Transverse colon (tissue), 4 donors: ENCODE measurements at regions of chr17 and their contacts with region 1.

Region 1: GRCh38 chr17:8118769-8119580 is 661 bp upstream of the ALOXE3 start:
- DNase-seq: peak; percentile 91
- H3K4me3 ChIP-seq: peak overlapping the region; percentile 16 to 56 (median 40)
- H3K27ac ChIP-seq: peak overlapping the region; percentile 81 to 88 (median 82)
- H3K4me1 ChIP-seq: peaks cover 36 to 68% (median 53%) of the 10 kb centered on the region in 4 donors
- H3K27me3 ChIP-seq: peaks cover 77% of the 10 kb centered on the region
- CTCF ChIP-seq: peak; percentile 83 to 97 (median 90)
- EP300 ChIP-seq: no peak
- POLR2A ChIP-seq: no peak

Region 2: DNA sequence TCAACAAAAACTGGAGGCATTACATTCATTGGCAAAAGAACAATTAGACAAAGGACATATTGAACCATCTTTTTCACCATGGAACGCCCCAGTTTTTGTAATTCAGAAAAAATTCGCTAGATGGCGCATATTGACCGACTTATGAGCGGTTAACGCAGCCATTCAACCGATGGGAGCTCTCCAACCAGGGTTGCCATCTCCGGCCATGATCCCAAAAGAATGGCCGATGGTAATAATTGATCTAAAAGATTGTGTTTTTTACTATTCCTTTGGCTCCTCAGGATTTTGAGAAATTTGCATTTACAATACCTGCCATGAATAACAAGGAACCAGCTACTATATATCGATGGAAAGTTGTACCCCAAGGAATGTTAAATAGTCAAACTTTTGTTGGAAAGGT is 58.7 kb before region 1 on chr17:
- in situ Hi-C with region 1: loop called in 1 of 4 experiments (anchors 10 kb)
- intact Hi-C with region 1: no loop called
- DNase-seq: peak; percentile 66
- H3K4me3 ChIP-seq: no peak overlapping the region
- H3K27ac ChIP-seq: no peak overlapping the region
- H3K4me1 ChIP-seq: peaks cover 0 to 28% (median 8%) of the 10 kb centered on the region in 4 donors
- H3K27me3 ChIP-seq: peaks cover 82% of the 10 kb centered on the region
- CTCF ChIP-seq: peak; percentile 73 to 91 (median 82)
- EP300 ChIP-seq: no peak
- POLR2A ChIP-seq: no peak

Region 3: GRCh38 chr17:8189711-8190477 is 70.9 kb after region 1 on chr17 and contains the start of gene BORCS6:
- in situ Hi-C with region 1: no loop called
- intact Hi-C with region 1: loop called (anchors 10 kb)
- DNase-seq: peak; percentile 98
- H3K4me3 ChIP-seq: peak within 1 kb of the TSS; percentile 66 to 75 (median 72)
- H3K27ac ChIP-seq: peak within 1 kb of the TSS; percentile 95 to 96 (median 96)
- H3K4me1 ChIP-seq: peaks cover 24 to 41% (median 33%) of the 10 kb centered on the region in 4 donors
- H3K27me3 ChIP-seq: no peaks in the 10 kb centered on the region
- CTCF ChIP-seq: peak in 2 of 5 experiments; percentile 9 to 10
- EP300 ChIP-seq: peak; percentile 9
- POLR2A ChIP-seq: peak; percentile 88
- total RNA-seq, gene BORCS6: 3.2 to 17.1 (median 12.7) TPM